ENCODE measurements at regions of chr18 and their contacts with region 1.

Region 1: GRCh38 chr18:50266248-50266704 is at the start of gene CFAP53:
- DNase-seq: peak; percentile 99
- H3K4me3 ChIP-seq: peak within 1 kb of the TSS; percentile 43 to 78 (median 70)
- H3K27ac ChIP-seq: peak within 1 kb of the TSS in 7 of 8 donors; percentile 81 to 91 (median 87)
- H3K4me1 ChIP-seq: peaks cover 13 to 38% (median 31%) of the 10 kb centered on the region in 6 donors
- H3K27me3 ChIP-seq: no peaks in the 10 kb centered on the region
- CTCF ChIP-seq: peak in 2 of 11 experiments; percentile 12 to 16
- POLR2A ChIP-seq: peak in 1 of 3 donors; percentile 8
- total RNA-seq, gene CFAP53: 0.25 to 0.85 (median 0.44) TPM in 5 of 7 donors, not detected in the others

Region 2: GRCh38 chr18:49486953-49487710 is 779.1 kb before region 1 on chr18 and contains the start of gene C18orf32:
- intact Hi-C with region 1: loop called (anchors 10 kb)
- DNase-seq: peak; percentile 99
- H3K4me3 ChIP-seq: peak within 1 kb of the TSS; percentile 49 to 80 (median 62)
- H3K27ac ChIP-seq: peak within 1 kb of the TSS; percentile 96 to 99 (median 98)
- H3K4me1 ChIP-seq: peaks cover 31 to 84% (median 66%) of the 10 kb centered on the region in 6 donors
- H3K27me3 ChIP-seq: no peaks in the 10 kb centered on the region
- CTCF ChIP-seq: no peak
- POLR2A ChIP-seq: peak; percentile 46 to 95 (median 93)
- total RNA-seq, gene C18orf32: 33.3 to 46.0 (median 40.1) TPM

Region 3: GRCh38 chr18:49795612-49796552 is 470.4 kb before region 1 on chr18:
- intact Hi-C with region 1: no loop called
- DNase-seq: no peak
- H3K4me3 ChIP-seq: no peak overlapping the region
- H3K27ac ChIP-seq: no peak overlapping the region
- H3K4me1 ChIP-seq: no peaks in the 10 kb centered on the region
- H3K27me3 ChIP-seq: no peaks in the 10 kb centered on the region
- CTCF ChIP-seq: no peak
- POLR2A ChIP-seq: no peak

Region 4: GRCh38 chr18:50356036-50356945 is 90.0 kb after region 1 on chr18:
- intact Hi-C with region 1: loop called (anchors 10 kb)
- DNase-seq: no peak
- H3K4me3 ChIP-seq: peak overlapping the region in 1 of 8 donors; percentile 32
- H3K27ac ChIP-seq: peak overlapping the region in 3 of 8 donors; percentile 12 to 39 (median 37)
- H3K4me1 ChIP-seq: peaks cover 4 to 17% (median 12%) of the 10 kb centered on the region in 6 donors
- H3K27me3 ChIP-seq: peaks cover 0 to 21% (median 3%) of the 10 kb centered on the region in 7 donors
- CTCF ChIP-seq: peak in 1 of 11 experiments; percentile 11
- POLR2A ChIP-seq: no peak

Measured in spleen (tissue), 13 donors.